ENCODE measurements at regions of chr7 and their contacts with region 1.

Region 1: GRCh38 chr7:105298439-105298907 is 90.2 kb downstream of the SRPK2 start:
- DNase-seq: peak; percentile 55
- H3K4me3 Mint-ChIP-seq: peak overlapping the region; percentile 33
- H3K27ac Mint-ChIP-seq: peak overlapping the region; percentile 44
- H3K4me1 Mint-ChIP-seq: peaks cover 51% of the 10 kb centered on the region
- H3K27me3 Mint-ChIP-seq: no peaks in the 10 kb centered on the region

Region 2: GRCh38 chr7:105315357-105315756 is 16.9 kb after region 1 on chr7:
- CTCF ChIA-PET with region 1: no interaction called
- intact Hi-C with region 1: no loop called
- DNase-seq: no peak
- H3K4me3 Mint-ChIP-seq: no peak overlapping the region
- H3K27ac Mint-ChIP-seq: no peak overlapping the region
- H3K4me1 Mint-ChIP-seq: peaks cover 26% of the 10 kb centered on the region
- H3K27me3 Mint-ChIP-seq: no peaks in the 10 kb centered on the region

Region 3: DNA sequence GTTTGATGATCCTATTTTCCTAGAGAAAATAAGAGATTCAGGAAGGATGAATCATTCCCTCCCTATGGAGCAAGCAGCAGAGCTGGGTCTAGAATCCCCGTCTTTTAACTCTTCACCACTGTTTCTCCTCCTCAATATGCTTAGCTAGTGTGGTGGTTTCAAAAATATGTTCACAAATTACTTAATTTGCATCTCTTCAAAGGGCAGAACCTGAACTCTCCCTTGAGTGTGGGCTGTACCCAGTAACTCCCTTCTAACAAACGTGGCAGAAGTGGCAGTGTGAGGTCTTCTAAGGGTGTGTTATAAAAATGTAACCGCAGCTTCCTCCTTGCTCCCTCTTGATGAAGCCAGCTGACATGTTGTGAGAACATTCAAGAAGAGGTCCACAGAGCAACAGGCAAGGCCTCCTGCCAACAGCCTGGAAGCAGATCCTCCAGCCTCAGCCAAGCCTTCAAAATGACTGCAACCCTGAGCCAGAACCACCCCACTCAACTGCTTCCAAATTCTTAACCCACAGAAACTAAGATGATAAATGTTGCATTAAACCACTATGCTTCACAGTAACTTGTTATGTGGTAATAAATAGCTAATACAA is 53.6 kb after region 1 on chr7:
- CTCF ChIA-PET with region 1: no interaction called
- intact Hi-C with region 1: loop called (anchors 1 kb)
- DNase-seq: peak; percentile 77
- H3K4me3 Mint-ChIP-seq: no peak overlapping the region
- H3K27ac Mint-ChIP-seq: peak overlapping the region; percentile 85
- H3K4me1 Mint-ChIP-seq: peaks cover 64% of the 10 kb centered on the region
- H3K27me3 Mint-ChIP-seq: no peaks in the 10 kb centered on the region

Region 4: GRCh38 chr7:105387621-105388372 is 89.3 kb after region 1 on chr7:
- CTCF ChIA-PET with region 1: no interaction called
- intact Hi-C with region 1: loop called (anchors 2 kb)
- DNase-seq: peak; percentile 58
- H3K4me3 Mint-ChIP-seq: peak overlapping the region; percentile 85
- H3K27ac Mint-ChIP-seq: peak overlapping the region; percentile 65
- H3K4me1 Mint-ChIP-seq: peaks cover 32% of the 10 kb centered on the region
- H3K27me3 Mint-ChIP-seq: no peaks in the 10 kb centered on the region